CD4-positive, alpha-beta memory T cell (primary cell): ENCODE measurements at regions of chr7 and their contacts with region 1.

Region 1: DNA sequence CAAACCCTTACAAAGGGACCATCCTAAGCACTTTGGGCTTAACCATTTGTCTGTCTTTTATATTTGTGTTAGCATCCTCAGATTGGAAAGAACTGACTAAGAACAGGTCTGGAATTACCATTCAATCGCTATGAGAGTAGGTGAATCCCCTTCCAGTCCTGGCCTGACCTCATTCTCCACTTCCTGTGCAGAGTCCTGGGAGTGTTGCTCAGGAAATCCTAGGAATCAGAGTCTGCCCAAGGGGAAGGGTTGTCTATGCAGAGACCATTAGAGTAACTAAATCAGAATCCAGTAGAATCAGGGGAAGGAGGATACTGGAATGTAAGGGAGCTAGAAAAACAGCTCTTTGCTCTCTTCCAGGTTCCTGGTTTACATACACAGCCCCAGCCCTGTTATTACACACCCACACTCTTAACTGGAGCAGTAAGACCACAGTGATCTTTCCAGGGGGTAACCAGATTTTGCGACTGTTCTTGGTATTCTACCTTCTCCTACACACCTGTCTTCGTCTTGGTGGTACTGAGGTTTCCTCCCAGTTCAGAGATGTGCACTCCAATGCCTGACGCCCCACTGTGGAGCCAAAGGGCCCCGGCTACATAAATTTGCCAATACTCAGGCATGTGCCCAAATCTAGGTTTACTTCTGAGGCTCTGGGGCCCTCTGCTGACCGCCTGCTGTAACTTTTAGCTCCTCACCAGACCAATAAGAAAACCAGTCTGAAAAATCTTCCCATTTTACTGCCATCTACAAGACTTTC is 103.7 kb downstream of the RNF216 start:
- DNase-seq: peak in 1 of 5 donors; percentile 43
- H3K4me3 ChIP-seq: no peak overlapping the region
- H3K4me3 Mint-ChIP-seq: peak overlapping the region in 1 of 8 donors; percentile 15
- H3K27ac ChIP-seq: no peak overlapping the region
- H3K27ac Mint-ChIP-seq: peak overlapping the region in 6 of 7 donors; percentile 25 to 77 (median 58)
- H3K4me1 ChIP-seq: peaks cover 42% of the 10 kb centered on the region
- H3K4me1 Mint-ChIP-seq: peaks cover 19 to 65% (median 45%) of the 10 kb centered on the region in 4 donors
- H3K27me3 ChIP-seq: no peaks in the 10 kb centered on the region
- H3K27me3 Mint-ChIP-seq: no peaks in the 10 kb centered on the region

Region 2: DNA sequence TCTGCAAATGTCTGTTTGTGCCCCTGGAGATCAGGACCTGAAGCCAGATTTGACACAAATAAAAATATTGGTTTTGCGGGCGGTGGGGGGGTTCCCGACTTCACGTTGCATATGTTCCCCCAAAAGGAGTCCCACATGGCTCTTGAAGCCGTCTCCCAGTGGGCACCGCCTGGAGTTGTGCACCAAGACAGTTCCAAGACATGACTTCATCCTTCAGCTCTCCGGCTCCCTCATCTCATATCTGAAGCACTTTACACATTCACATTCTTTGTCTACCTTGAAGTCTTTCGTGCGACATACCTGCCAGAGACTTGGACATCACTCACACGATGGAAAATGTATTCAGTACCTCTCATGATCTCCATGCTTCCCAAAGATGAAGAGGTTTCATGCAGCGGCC is 1358.4 kb before region 1 on chr7:
- CTCF ChIA-PET with region 1: no interaction called
- POLR2A ChIA-PET with region 1: no interaction called
- intact Hi-C with region 1: no loop called
- DNase-seq: no peak
- H3K4me3 ChIP-seq: no peak overlapping the region
- H3K4me3 Mint-ChIP-seq: no peak overlapping the region
- H3K27ac ChIP-seq: no peak overlapping the region
- H3K27ac Mint-ChIP-seq: no peak overlapping the region
- H3K4me1 ChIP-seq: no peaks in the 10 kb centered on the region
- H3K4me1 Mint-ChIP-seq: peaks cover 0 to 1% (median 0%) of the 10 kb centered on the region in 4 donors
- H3K27me3 ChIP-seq: no peaks in the 10 kb centered on the region
- H3K27me3 Mint-ChIP-seq: peaks cover 1 to 6% of the 10 kb centered on the region in 2 donors

Region 3: GRCh38 chr7:5193880-5194279 is 483.8 kb before region 1 on chr7:
- CTCF ChIA-PET with region 1: no interaction called
- POLR2A ChIA-PET with region 1: no interaction called
- intact Hi-C with region 1: no loop called
- DNase-seq: no peak
- H3K4me3 ChIP-seq: no peak overlapping the region
- H3K4me3 Mint-ChIP-seq: no peak overlapping the region
- H3K27ac ChIP-seq: no peak overlapping the region
- H3K27ac Mint-ChIP-seq: peak overlapping the region in 1 of 7 donors; percentile 12
- H3K4me1 ChIP-seq: peaks cover 28% of the 10 kb centered on the region
- H3K4me1 Mint-ChIP-seq: peaks cover 26 to 45% (median 28%) of the 10 kb centered on the region in 4 donors
- H3K27me3 ChIP-seq: no peaks in the 10 kb centered on the region
- H3K27me3 Mint-ChIP-seq: no peaks in the 10 kb centered on the region

Region 4: DNA sequence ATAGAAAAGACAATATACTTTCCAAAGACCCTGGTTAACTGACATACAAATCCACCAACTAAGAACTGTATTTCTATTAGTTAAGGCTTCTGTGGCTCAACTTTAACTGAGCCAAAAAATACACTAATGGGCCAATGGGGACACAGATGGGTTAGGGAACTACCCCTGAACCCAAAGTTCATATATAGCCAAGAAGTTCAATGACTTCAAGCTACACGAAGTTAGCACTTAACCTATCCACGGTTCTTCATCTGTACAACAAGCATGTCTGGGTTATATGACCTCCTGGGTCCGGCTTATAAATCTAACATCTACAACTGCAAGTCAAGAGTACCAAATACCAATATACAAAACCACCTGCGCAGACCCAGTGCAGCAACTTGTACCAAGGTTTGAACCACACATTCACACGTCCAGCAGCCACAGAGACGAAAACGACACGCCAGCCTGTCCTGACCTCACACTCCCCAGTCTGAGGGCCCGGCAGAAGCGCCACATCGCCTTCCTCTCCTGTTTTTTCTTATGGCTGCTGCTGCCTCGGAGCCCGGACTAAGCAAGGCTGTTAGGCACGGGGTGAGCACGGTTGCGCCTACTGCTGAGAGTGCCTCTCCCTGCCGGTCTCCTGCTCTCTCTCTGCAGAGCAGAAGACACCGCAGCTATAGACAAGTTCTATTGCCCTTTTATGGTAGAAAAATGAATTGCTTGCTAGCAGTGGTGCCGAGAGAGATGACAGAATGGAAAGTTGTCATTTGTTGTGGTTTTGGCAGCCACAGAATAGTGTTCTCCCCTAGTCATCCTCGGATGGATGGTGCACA is 17.4 kb after region 1 on chr7:
- CTCF ChIA-PET with region 1: interaction called, 8 read pairs
- POLR2A ChIA-PET with region 1: interaction called, 5 read pairs
- intact Hi-C with region 1: loop called (anchors 2 kb)
- DNase-seq: peak; percentile 76 to 89 (median 80)
- H3K4me3 ChIP-seq: peak overlapping the region; percentile 44 to 51
- H3K4me3 Mint-ChIP-seq: peak overlapping the region; percentile 90 to 98 (median 95)
- H3K27ac ChIP-seq: peak overlapping the region; percentile 64
- H3K27ac Mint-ChIP-seq: peak overlapping the region; percentile 88 to 98 (median 94)
- H3K4me1 ChIP-seq: peaks cover 100% of the 10 kb centered on the region
- H3K4me1 Mint-ChIP-seq: peaks cover 79 to 99% (median 90%) of the 10 kb centered on the region in 4 donors
- H3K27me3 ChIP-seq: no peaks in the 10 kb centered on the region
- H3K27me3 Mint-ChIP-seq: no peaks in the 10 kb centered on the region

Region 5: GRCh38 chr7:5892498-5892897 is 214.8 kb after region 1 on chr7:
- CTCF ChIA-PET with region 1: no interaction called
- POLR2A ChIA-PET with region 1: no interaction called
- intact Hi-C with region 1: no loop called
- DNase-seq: no peak
- H3K4me3 ChIP-seq: no peak overlapping the region
- H3K4me3 Mint-ChIP-seq: no peak overlapping the region
- H3K27ac ChIP-seq: no peak overlapping the region
- H3K27ac Mint-ChIP-seq: no peak overlapping the region
- H3K4me1 ChIP-seq: no peaks in the 10 kb centered on the region
- H3K4me1 Mint-ChIP-seq: peaks cover 0 to under 1% (median 0%) of the 10 kb centered on the region in 4 donors
- H3K27me3 ChIP-seq: no peaks in the 10 kb centered on the region
- H3K27me3 Mint-ChIP-seq: no peaks in the 10 kb centered on the region